Activated CD8-positive, alpha-beta memory T cell treated with anti-CD3 and anti-CD28 coated beads, Interleukin-2, amount 10 ng/mL, durations not matched to agents 7 days and 5 days (primary cell): ENCODE measurements at regions of chr7 and their contacts with region 1.

Region 1: GRCh38 chr7:140175221-140176121 is 1.3 kb downstream of the KDM7A start:
- DNase-seq: peak; percentile 96
- ATAC-seq: peak; percentile 64
- H3K4me3 Mint-ChIP-seq: peak overlapping the region; percentile 74
- H3K27ac Mint-ChIP-seq: peak overlapping the region; percentile 67
- H3K4me1 Mint-ChIP-seq: peaks cover 38% of the 10 kb centered on the region
- H3K27me3 Mint-ChIP-seq: peaks cover 18% of the 10 kb centered on the region

Region 2: DNA sequence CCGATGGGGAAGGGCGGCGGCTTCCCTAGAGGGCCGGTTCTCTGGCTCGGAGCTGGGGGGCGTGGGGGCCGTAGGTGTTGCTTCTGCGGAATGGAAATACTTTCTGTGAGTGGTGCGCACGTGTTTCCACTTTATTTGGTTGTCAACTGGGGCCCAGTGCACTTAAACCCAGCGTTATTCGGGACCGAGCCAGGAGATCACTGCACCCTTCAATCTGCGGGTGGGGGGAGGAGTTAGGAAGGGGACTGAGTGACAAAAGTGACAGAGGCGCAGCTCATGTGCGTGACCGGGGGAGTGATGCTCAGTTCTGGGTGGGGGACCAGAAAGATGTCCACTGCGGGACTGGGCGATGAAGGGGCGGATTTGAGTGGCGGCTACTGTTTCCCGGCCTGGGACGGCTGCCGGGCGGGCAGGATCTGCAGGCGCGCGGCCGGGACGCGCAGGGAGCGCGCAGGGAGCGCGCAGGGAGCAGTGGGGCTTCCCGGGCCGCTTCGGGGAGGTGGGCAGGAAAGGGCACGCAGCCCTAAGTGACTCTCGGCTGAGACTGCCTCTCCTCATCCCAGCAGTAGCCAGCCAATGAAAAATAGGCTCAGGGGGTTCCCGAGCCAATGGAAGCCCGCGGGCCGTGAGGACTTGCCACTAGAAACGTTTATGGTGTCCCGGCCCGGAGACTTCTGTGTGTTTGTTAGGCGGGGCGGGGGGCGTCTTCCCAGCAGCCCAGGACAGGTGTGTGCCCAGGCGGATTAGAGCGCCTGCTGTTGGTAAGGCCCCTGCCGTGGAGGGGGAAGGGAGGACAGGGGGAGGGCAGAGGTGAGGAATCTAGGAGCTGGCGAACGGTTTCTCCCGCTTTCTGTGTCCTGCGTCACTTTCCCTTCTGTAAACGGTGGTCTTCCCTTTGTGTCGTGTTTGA is 55.6 kb after region 1 on chr7:
- CTCF ChIA-PET with region 1: interaction called, 14 read pairs
- DNase-seq: peak; percentile 76
- ATAC-seq: peak; percentile 56
- H3K4me3 Mint-ChIP-seq: peak overlapping the region; percentile 82
- H3K27ac Mint-ChIP-seq: peak overlapping the region; percentile 86
- H3K4me1 Mint-ChIP-seq: peaks cover 31% of the 10 kb centered on the region
- H3K27me3 Mint-ChIP-seq: no peaks in the 10 kb centered on the region

Region 3: DNA sequence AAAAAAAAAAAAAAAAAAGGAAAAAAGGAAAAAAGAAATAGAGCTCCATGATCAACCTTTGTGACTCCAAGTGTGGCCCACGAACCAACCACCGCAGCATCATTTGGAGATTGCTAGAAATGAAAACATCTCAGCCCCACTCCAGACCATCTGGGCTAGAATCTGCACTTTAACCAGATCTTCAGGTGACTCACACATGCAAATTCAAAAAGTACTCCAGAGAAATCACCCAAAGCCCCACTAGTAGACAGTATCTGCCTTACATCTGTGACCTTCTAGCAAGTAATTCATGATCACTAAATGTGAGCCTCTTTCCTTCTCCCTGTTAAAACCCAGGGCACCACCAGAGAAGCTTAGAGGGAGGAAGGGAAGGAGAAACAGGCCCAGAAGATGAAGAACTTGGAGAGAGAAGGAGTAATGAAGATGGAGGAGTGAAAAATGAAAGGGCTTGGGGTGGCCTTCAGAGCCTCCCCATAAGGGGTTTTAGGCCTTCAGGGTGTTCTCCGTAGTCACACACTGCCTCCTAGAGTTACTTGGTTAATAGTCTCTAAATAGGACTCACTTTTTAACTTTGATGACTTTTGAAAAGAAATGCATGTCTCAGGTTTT is 128.8 kb after region 1 on chr7:
- CTCF ChIA-PET with region 1: interaction called, 11 read pairs
- DNase-seq: peak; percentile 70
- ATAC-seq: peak; percentile 95
- H3K4me3 Mint-ChIP-seq: no peak overlapping the region
- H3K27ac Mint-ChIP-seq: peak overlapping the region; percentile 58
- H3K4me1 Mint-ChIP-seq: peaks cover 9% of the 10 kb centered on the region
- H3K27me3 Mint-ChIP-seq: peaks cover 1% of the 10 kb centered on the region

Region 4: GRCh38 chr7:140501966-140502365 is 326.5 kb after region 1 on chr7:
- CTCF ChIA-PET with region 1: no interaction called
- DNase-seq: no peak
- ATAC-seq: no peak
- H3K4me3 Mint-ChIP-seq: no peak overlapping the region
- H3K27ac Mint-ChIP-seq: no peak overlapping the region
- H3K4me1 Mint-ChIP-seq: no peaks in the 10 kb centered on the region
- H3K27me3 Mint-ChIP-seq: peaks cover 3% of the 10 kb centered on the region